HCT116 (cell line): ENCODE measurements at regions of chr2 and their contacts with region 1.

Region 1: GRCh38 chr2:219294356-219295351 is 14.5 kb downstream of the PTPRN start:
- DNase-seq: peak; percentile 78
- ATAC-seq: peak; percentile 86
- H3K4me3 ChIP-seq: peak overlapping the region; percentile 33 to 50
- H3K27ac ChIP-seq: peak overlapping the region; percentile 25; the same call in 1 of the 2 replicates
- H3K4me1 ChIP-seq: peaks cover 7 to 20% of the 10 kb centered on the region in 2 experiments; a peak in 3 of 4 replicates
- H3K27me3 ChIP-seq: no peaks in the 10 kb centered on the region
- CTCF ChIP-seq: peak; percentile 94 to 99 (median 98)
- POLR2A ChIP-seq: no peak
- RAD21 ChIP-seq: peak; percentile 83

Region 2: GRCh38 chr2:218659258-218659987 is 635.2 kb before region 1 on chr2 and contains the starts of genes BCS1L and ZNF142:
- CTCF ChIA-PET with region 1: no interaction called
- POLR2A ChIA-PET with region 1: no interaction called
- RAD21 ChIA-PET with region 1: no interaction called
- intact Hi-C with region 1: no loop called
- DNase-seq: peak; percentile 81
- ATAC-seq: peak; percentile 89
- H3K4me3 ChIP-seq: peak within 1 kb of the TSS; percentile 88 to 96
- H3K27ac ChIP-seq: peak within 1 kb of the TSS; percentile 70
- H3K4me1 ChIP-seq: peaks cover 0 to 19% of the 10 kb centered on the region in 2 experiments; a peak in 2 of 4 replicates
- H3K27me3 ChIP-seq: no peaks in the 10 kb centered on the region
- CTCF ChIP-seq: no peak
- POLR2A ChIP-seq: peak; percentile 57
- RAD21 ChIP-seq: no peak
- total RNA-seq, gene BCS1L: 57.4 TPM
- total RNA-seq, gene ZNF142: 29.2 TPM

Region 3: DNA sequence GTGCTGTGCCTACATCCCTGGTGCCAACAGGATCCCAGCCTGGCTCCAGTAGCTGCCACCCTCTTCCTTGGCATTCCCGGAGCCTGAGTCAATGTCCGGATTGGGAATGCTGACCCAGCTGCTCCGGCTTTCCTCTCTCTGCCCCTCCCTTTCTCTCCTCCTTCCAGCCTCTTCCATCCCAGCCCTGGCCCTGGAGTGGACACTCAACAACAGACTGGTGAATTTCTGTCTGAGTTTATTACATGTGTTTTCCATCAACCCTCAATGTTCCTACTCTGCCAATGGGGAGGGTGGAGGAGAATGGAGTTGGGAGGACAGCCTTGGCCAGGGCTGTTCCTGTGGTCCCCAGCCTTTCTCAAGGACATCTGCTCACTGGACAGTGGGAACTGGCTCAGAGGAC is 462.1 kb before region 1 on chr2:
- CTCF ChIA-PET with region 1: no interaction called
- POLR2A ChIA-PET with region 1: no interaction called
- RAD21 ChIA-PET with region 1: no interaction called
- intact Hi-C with region 1: no loop called
- DNase-seq: no peak
- ATAC-seq: peak; percentile 57
- H3K4me3 ChIP-seq: peak overlapping the region in 1 of 2 experiments; percentile 5; a peak in 1 of 4 replicates
- H3K27ac ChIP-seq: no peak overlapping the region
- H3K4me1 ChIP-seq: peaks cover 28 to 40% of the 10 kb centered on the region in 2 experiments
- H3K27me3 ChIP-seq: no peaks in the 10 kb centered on the region
- CTCF ChIP-seq: no peak
- POLR2A ChIP-seq: no peak
- RAD21 ChIP-seq: no peak

Region 4: GRCh38 chr2:218910741-218911140 is 383.9 kb before region 1 on chr2:
- CTCF ChIA-PET with region 1: no interaction called
- POLR2A ChIA-PET with region 1: no interaction called
- RAD21 ChIA-PET with region 1: no interaction called
- intact Hi-C with region 1: no loop called
- DNase-seq: no peak
- ATAC-seq: no peak
- H3K4me3 ChIP-seq: no peak overlapping the region
- H3K27ac ChIP-seq: no peak overlapping the region
- H3K4me1 ChIP-seq: peaks cover 7 to 17% of the 10 kb centered on the region in 2 experiments
- H3K27me3 ChIP-seq: no peaks in the 10 kb centered on the region
- CTCF ChIP-seq: no peak
- POLR2A ChIP-seq: no peak
- RAD21 ChIP-seq: no peak

Region 5: GRCh38 chr2:219160186-219161017 is 134.3 kb before region 1 on chr2 and contains the start of gene NHEJ1:
- CTCF ChIA-PET with region 1: interaction called, 8 read pairs
- POLR2A ChIA-PET with region 1: no interaction called
- RAD21 ChIA-PET with region 1: no interaction called
- intact Hi-C with region 1: loop called (anchors 1 kb)
- DNase-seq: peak; percentile 88
- ATAC-seq: peak; percentile 94
- H3K4me3 ChIP-seq: peak within 1 kb of the TSS; percentile 67 to 69
- H3K27ac ChIP-seq: peak within 1 kb of the TSS; percentile 82
- H3K4me1 ChIP-seq: peaks cover 5 to 16% of the 10 kb centered on the region in 2 experiments; a peak in 3 of 4 replicates
- H3K27me3 ChIP-seq: no peaks in the 10 kb centered on the region
- CTCF ChIP-seq: peak; percentile 94 to 99 (median 95)
- POLR2A ChIP-seq: peak; percentile 86
- RAD21 ChIP-seq: peak; percentile 95
- total RNA-seq, gene NHEJ1: 16.4 TPM

Region 6: DNA sequence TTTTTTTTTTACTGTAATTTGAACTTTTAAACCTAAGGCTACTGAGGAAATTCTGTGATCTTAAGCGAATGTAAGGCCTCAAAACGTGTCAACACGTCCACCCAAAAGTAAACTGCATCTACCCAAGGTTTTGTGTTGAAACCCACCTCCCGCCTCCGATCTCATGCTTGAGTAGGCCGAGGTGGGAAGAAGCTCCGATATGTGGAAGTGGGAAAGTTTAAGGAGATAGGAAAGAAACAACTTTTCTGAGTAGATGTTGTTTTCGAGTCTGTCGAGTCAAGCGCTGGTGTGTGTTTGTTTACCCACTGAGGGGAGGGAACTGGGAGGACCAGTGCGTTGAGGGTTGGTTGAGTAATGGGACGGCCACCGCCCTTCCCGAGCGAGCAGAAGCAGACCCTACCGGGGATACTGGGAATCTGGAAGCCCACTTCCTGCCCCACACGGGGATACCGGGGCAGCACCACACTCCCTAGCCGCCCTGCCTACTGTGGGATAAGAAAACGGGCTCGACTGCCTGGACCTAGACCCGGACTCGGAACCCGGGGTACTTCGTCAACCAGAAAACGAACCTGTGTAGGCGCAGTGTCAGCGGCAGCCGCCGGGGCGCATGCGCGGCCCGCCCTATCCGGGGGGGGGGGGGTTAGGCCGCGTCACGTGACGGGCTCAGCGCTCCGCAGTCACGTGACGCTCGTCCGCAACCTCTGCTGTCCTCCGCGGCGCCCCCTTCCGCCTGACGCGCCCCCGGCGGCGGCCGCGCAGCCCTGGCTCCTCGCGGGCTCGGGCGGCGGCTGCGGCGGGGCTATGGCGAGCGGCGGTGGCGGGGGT is 116.9 kb before region 1 on chr2 and contains the start of gene RETREG2:
- CTCF ChIA-PET with region 1: interaction called, 16 read pairs
- POLR2A ChIA-PET with region 1: no interaction called
- RAD21 ChIA-PET with region 1: interaction called in 1 of 2 experiments, 3 read pairs
- intact Hi-C with region 1: no loop called
- DNase-seq: peak; percentile 84
- ATAC-seq: peak; percentile 68
- H3K4me3 ChIP-seq: peak within 1 kb of the TSS; percentile 87 to 93
- H3K27ac ChIP-seq: peak within 1 kb of the TSS; percentile 97
- H3K4me1 ChIP-seq: peaks cover 10 to 27% of the 10 kb centered on the region in 2 experiments
- H3K27me3 ChIP-seq: no peaks in the 10 kb centered on the region
- CTCF ChIP-seq: peak in 1 of 3 experiments; percentile 28; a peak in 1 of 6 replicates
- POLR2A ChIP-seq: peak; percentile 85
- RAD21 ChIP-seq: no peak
- total RNA-seq, gene RETREG2: 63.7 TPM

Region 7: DNA sequence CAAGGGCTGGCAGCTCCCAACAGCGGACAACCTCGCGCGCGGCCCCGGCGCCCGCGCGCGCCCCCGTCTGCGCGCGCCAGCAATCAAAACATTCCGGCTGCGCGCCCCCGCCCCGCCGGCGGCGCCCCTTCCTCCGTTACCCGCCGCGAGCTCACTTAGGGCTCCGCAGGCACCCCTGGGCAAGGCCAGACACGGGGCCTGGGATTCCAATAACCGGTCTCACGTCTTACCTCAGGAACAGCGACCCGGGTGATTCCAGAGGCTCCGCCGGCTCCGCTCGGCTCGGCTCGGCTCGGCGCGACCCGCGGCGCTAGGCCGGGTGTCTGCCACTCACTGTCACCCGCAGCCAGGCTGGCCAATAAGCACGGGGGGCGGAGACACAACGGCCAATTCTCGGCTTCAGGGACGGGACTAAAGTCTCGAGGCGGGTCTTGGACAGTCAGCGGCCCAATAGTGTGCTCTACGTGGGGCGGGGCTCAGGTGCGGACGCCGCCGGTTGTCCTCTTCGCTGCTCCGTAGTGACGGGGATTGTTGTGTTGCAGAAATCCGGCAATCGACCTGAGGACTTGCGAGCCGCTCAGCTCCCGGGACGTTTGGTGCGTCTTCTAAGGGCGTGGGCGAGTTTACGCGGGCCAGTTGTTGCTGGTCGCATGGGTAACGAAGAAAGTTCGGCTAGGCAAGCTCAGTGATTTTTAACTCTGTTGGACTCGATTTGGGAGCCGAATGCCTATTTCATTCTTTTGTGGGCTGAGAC is 65.2 kb before region 1 on chr2 and contains the starts of genes ANKZF1 and ATG9A:
- CTCF ChIA-PET with region 1: interaction called, 12 read pairs
- POLR2A ChIA-PET with region 1: no interaction called
- RAD21 ChIA-PET with region 1: no interaction called
- intact Hi-C with region 1: loop called (anchors 5 kb)
- DNase-seq: peak; percentile 96
- ATAC-seq: peak; percentile 98
- H3K4me3 ChIP-seq: peak within 1 kb of the TSS; percentile 79 to 98
- H3K27ac ChIP-seq: peak within 1 kb of the TSS; percentile 78
- H3K4me1 ChIP-seq: peaks cover 6 to 18% of the 10 kb centered on the region in 2 experiments; a peak in 3 of 4 replicates
- H3K27me3 ChIP-seq: no peaks in the 10 kb centered on the region
- CTCF ChIP-seq: no peak
- POLR2A ChIP-seq: peak; percentile 78
- RAD21 ChIP-seq: no peak
- total RNA-seq, gene ANKZF1: 64.7 TPM
- total RNA-seq, gene ATG9A: 51.8 TPM

Region 8: DNA sequence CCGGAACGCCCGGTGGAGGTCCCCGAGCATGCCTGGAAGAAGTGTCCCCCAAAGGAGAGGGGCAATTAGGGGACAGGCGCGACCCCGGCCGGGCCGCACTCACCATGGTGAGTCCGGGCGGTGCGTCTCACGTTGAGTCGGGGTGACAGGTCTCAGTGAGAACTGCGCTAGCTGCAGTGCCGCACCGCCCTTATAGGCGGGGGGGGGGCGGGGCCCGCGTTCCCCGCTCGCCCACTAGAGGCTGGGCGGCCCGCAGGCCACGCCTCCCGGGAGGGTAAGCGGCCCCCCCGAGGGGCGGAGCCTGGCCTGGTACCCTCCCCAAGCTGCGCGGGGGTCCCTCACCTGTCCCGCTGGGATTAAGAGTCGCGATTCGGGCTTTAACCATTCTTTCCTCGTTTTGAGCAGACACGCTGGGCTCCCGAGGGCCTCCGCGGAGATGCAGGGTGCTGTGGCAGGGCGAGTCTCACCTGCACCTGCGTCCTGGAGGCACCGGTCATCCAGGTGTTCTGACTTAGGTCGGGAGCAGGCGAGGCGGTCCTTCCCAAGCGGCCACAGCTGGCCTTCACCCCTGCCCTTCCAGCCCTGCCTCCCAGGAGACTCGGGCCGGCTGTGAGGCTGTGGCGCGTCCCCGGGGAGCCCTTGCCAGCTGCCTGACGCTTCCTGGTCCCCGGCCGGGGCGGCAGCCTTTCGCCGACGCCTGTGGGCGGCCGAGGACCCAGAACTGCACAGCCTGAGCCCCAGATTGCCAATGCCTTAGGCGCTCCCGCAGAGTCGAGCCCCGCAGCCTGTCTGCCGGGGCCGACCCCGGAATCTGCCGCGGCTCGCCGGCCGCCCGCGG is 40.7 kb before region 1 on chr2 and contains the start of gene TUBA4A:
- CTCF ChIA-PET with region 1: interaction called, 14 read pairs
- POLR2A ChIA-PET with region 1: interaction called, 3 read pairs
- RAD21 ChIA-PET with region 1: interaction called in 1 of 2 experiments, 3 read pairs
- intact Hi-C with region 1: loop called (anchors 2 kb)
- DNase-seq: peak; percentile 49
- ATAC-seq: peak; percentile 87
- H3K4me3 ChIP-seq: peak within 1 kb of the TSS; percentile 69 to 84
- H3K27ac ChIP-seq: peak within 1 kb of the TSS; percentile 55
- H3K4me1 ChIP-seq: peaks cover 25 to 52% of the 10 kb centered on the region in 2 experiments
- H3K27me3 ChIP-seq: peaks cover 5% of the 10 kb centered on the region; the same call in 1 of the 2 replicates
- CTCF ChIP-seq: no peak
- POLR2A ChIP-seq: peak; percentile 96
- RAD21 ChIP-seq: no peak
- total RNA-seq, gene TUBA4A: 32.7 TPM